ENCODE measurements at regions of chr6 and their contacts with region 1.

Region 1: GRCh38 chr6:16761471-16762267 is 409 bp upstream of the ATXN1 start:
- DNase-seq: peak; percentile 92 to 93
- H3K4me3 ChIP-seq: peak overlapping the region; percentile 75
- H3K4me3 Mint-ChIP-seq: peak overlapping the region; percentile 100
- H3K27ac Mint-ChIP-seq: peak overlapping the region; percentile 61
- H3K4me1 ChIP-seq: peaks cover 20% of the 10 kb centered on the region; the same call in 1 of the 2 replicates
- H3K4me1 Mint-ChIP-seq: peaks cover 18% of the 10 kb centered on the region
- H3K27me3 ChIP-seq: no peaks in the 10 kb centered on the region
- H3K27me3 Mint-ChIP-seq: no peaks in the 10 kb centered on the region
- CTCF ChIP-seq: peak; percentile 15 to 38

Region 2: DNA sequence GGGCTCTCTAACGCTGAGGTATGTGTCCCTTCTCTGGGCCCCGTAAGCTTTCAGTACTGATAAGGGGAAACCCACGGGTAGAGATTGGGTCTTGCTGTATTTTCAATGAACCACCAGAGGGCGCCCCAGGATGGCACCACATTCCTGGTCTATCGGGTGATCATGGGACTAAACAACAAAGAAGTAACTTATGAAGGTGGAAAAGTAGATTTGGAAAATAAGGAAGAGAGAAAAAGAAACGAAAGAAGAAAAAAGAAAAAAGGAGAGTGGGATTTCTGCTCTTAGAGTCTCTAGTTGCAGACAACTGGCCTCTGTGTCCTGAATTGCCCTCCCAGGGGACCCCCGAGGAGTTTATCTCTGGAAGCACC is 429.5 kb before region 1 on chr6:
- CTCF ChIA-PET with region 1: no interaction called
- POLR2A ChIA-PET with region 1: no interaction called
- intact Hi-C with region 1: loop called (anchors 2 kb)
- DNase-seq: peak; percentile 79 to 84
- H3K4me3 ChIP-seq: no peak overlapping the region
- H3K4me3 Mint-ChIP-seq: no peak overlapping the region
- H3K27ac Mint-ChIP-seq: no peak overlapping the region
- H3K4me1 ChIP-seq: peaks cover 6% of the 10 kb centered on the region
- H3K4me1 Mint-ChIP-seq: peaks cover 6% of the 10 kb centered on the region
- H3K27me3 ChIP-seq: no peaks in the 10 kb centered on the region
- H3K27me3 Mint-ChIP-seq: no peaks in the 10 kb centered on the region
- CTCF ChIP-seq: peak; percentile 89 to 94

Region 3: DNA sequence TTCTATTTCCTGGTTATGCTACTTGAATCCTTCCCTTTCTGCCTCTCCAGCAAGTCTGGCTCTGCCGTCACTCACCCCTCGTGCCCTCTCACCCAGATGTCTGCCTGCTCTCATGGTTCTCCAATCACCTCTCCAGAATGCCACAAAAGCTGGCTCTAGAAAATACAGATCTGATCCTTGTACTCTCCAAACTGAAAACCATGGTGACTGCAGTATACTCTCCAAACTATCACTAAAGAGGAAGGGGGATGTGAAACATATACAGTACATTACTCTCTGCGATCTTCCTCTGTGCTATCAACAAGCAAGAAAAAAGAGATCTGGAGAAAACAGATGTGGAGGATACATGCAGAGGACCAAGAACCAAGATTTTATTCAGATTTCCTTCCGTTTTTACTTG is 91.5 kb before region 1 on chr6:
- CTCF ChIA-PET with region 1: interaction called, 5 read pairs
- POLR2A ChIA-PET with region 1: no interaction called
- intact Hi-C with region 1: loop called (anchors 5 kb)
- DNase-seq: no peak
- H3K4me3 ChIP-seq: no peak overlapping the region
- H3K4me3 Mint-ChIP-seq: no peak overlapping the region
- H3K27ac Mint-ChIP-seq: no peak overlapping the region
- H3K4me1 ChIP-seq: no peaks in the 10 kb centered on the region
- H3K4me1 Mint-ChIP-seq: peaks cover 2% of the 10 kb centered on the region
- H3K27me3 ChIP-seq: no peaks in the 10 kb centered on the region
- H3K27me3 Mint-ChIP-seq: no peaks in the 10 kb centered on the region
- CTCF ChIP-seq: no peak

Region 4: DNA sequence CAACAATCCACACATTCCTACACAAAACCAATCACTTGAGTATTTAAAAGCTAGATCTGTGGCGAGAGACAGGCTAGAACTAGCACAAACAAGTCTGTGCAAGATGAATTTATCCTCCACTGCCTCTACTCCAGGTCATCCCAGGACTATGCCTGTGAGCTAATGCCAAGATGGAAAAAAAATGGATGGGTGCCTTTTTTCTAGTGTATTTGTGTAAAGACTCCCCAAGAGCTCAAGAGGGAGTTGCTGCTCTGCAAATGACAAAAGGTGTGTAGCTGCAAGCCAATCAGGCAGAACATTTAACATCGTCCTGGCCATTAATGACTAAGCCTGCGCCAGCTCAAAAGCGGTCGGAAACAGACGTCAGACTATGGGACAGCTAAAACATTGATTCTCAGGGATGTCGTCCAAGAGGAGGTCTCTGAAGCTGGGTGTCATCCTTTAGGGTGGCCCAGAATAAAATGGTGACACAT is 22.3 kb before region 1 on chr6:
- CTCF ChIA-PET with region 1: interaction called, 12 read pairs
- POLR2A ChIA-PET with region 1: no interaction called
- intact Hi-C with region 1: no loop called
- DNase-seq: no peak
- H3K4me3 ChIP-seq: no peak overlapping the region
- H3K4me3 Mint-ChIP-seq: no peak overlapping the region
- H3K27ac Mint-ChIP-seq: no peak overlapping the region
- H3K4me1 ChIP-seq: no peaks in the 10 kb centered on the region; the same call in 1 of the 2 replicates
- H3K4me1 Mint-ChIP-seq: peaks cover 11% of the 10 kb centered on the region
- H3K27me3 ChIP-seq: no peaks in the 10 kb centered on the region
- H3K27me3 Mint-ChIP-seq: no peaks in the 10 kb centered on the region
- CTCF ChIP-seq: peak in 1 of 2 experiments; percentile 18

Region 5: GRCh38 chr6:16929809-16930208 is 168.1 kb after region 1 on chr6:
- CTCF ChIA-PET with region 1: no interaction called
- POLR2A ChIA-PET with region 1: no interaction called
- intact Hi-C with region 1: no loop called
- DNase-seq: no peak
- H3K4me3 ChIP-seq: no peak overlapping the region
- H3K4me3 Mint-ChIP-seq: no peak overlapping the region
- H3K27ac Mint-ChIP-seq: no peak overlapping the region
- H3K4me1 ChIP-seq: no peaks in the 10 kb centered on the region
- H3K4me1 Mint-ChIP-seq: no peaks in the 10 kb centered on the region
- H3K27me3 ChIP-seq: no peaks in the 10 kb centered on the region
- H3K27me3 Mint-ChIP-seq: peaks cover 15% of the 10 kb centered on the region
- CTCF ChIP-seq: no peak

Region 6: GRCh38 chr6:17086469-17086868 is 324.8 kb after region 1 on chr6:
- CTCF ChIA-PET with region 1: interaction called, 5 read pairs
- POLR2A ChIA-PET with region 1: no interaction called
- intact Hi-C with region 1: loop called (anchors 5 kb)
- DNase-seq: peak; percentile 51 to 62
- H3K4me3 ChIP-seq: no peak overlapping the region
- H3K4me3 Mint-ChIP-seq: no peak overlapping the region
- H3K27ac Mint-ChIP-seq: no peak overlapping the region
- H3K4me1 ChIP-seq: no peaks in the 10 kb centered on the region
- H3K4me1 Mint-ChIP-seq: no peaks in the 10 kb centered on the region
- H3K27me3 ChIP-seq: no peaks in the 10 kb centered on the region
- H3K27me3 Mint-ChIP-seq: peaks cover 4% of the 10 kb centered on the region
- CTCF ChIP-seq: peak; percentile 50 to 53

Region 7: GRCh38 chr6:17233531-17233930 is 471.9 kb after region 1 on chr6:
- CTCF ChIA-PET with region 1: no interaction called
- POLR2A ChIA-PET with region 1: no interaction called
- intact Hi-C with region 1: no loop called
- DNase-seq: no peak
- H3K4me3 ChIP-seq: no peak overlapping the region
- H3K4me3 Mint-ChIP-seq: no peak overlapping the region
- H3K27ac Mint-ChIP-seq: no peak overlapping the region
- H3K4me1 ChIP-seq: no peaks in the 10 kb centered on the region
- H3K4me1 Mint-ChIP-seq: no peaks in the 10 kb centered on the region
- H3K27me3 ChIP-seq: no peaks in the 10 kb centered on the region
- H3K27me3 Mint-ChIP-seq: peaks cover 4% of the 10 kb centered on the region
- CTCF ChIP-seq: no peak

Region 8: DNA sequence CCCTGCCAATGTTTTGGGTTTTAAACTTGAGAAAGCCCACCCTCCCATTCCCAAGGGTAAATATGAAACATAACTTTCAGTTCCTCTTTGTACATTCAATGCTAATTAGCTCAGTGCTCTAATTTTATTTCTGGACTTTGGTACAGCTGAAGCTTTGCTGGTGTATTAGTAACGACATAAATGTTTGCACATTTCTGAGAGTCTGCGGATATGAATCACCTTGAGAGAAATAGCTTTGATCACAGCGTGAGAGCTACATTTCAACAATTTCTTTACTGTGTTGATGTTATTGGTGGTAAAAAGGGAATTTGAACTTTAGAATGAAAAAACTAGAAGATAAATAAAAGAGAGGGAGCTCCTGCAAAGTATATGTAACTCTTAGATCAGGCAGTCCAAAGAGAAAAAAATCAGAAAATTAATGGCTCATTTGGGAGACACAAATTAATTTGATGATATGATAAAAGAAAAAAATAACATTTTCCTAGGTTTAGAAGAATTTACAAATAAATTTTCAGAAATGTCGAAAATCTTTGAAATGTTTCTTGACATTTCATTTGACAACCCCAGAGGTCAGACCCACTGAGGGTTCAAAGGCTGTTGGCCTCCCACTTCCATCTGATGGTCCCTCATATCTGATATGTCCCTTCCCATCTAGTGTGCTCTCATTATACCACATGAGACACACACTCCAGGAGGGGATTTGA is 593.2 kb after region 1 on chr6:
- CTCF ChIA-PET with region 1: no interaction called
- POLR2A ChIA-PET with region 1: no interaction called
- intact Hi-C with region 1: no loop called
- DNase-seq: no peak
- H3K4me3 ChIP-seq: no peak overlapping the region
- H3K4me3 Mint-ChIP-seq: peak overlapping the region; percentile 9
- H3K27ac Mint-ChIP-seq: no peak overlapping the region
- H3K4me1 ChIP-seq: peaks cover 5% of the 10 kb centered on the region; the same call in 1 of the 2 replicates
- H3K4me1 Mint-ChIP-seq: peaks cover 12% of the 10 kb centered on the region
- H3K27me3 ChIP-seq: no peaks in the 10 kb centered on the region
- H3K27me3 Mint-ChIP-seq: no peaks in the 10 kb centered on the region
- CTCF ChIP-seq: no peak

Measured in Caco-2 (cell line).